Panc1 (cell line): ENCODE measurements at regions of chr3 and their contacts with region 1.

Region 1: DNA sequence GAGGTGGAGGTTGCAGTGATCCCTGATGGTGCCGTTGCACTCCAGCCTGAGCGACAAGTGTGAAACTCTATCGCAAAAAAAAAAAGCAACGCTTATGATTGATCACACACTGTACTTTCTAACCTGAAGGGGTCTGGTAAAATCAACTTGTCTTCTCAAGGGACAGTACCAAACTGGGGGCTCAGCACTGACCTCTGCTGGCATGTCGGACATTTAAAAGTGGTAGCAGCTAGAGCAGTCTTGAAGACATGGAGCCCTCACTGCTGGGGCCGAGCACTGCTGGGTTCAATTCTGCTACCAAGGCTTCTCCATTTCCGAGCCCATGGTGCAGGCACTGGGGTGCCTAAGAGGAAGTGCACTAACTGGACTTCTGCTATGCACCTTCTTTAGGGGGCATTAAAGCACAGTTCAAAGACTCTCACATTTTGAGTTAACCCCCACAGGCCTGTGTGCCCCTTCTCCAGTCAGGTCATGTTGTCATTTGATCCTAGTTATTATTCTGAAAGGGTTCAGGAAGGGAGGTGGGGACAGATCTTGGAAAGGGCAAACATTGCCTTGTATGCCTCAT is 26.4 kb upstream of the LAMP3 start:
- DNase-seq: no peak
- ATAC-seq: no peak
- H3K4me3 ChIP-seq: no peak overlapping the region
- H3K27ac ChIP-seq: no peak overlapping the region
- H3K4me1 ChIP-seq: peaks cover 8% of the 10 kb centered on the region
- H3K27me3 ChIP-seq: no peaks in the 10 kb centered on the region
- CTCF ChIP-seq: peak; percentile 80

Region 2: GRCh38 chr3:182947888-182948287 is 241.1 kb before region 1 on chr3:
- CTCF ChIA-PET with region 1: no interaction called
- POLR2A ChIA-PET with region 1: no interaction called
- in situ Hi-C with region 1: no loop called
- intact Hi-C with region 1: no loop called
- DNase-seq: no peak
- ATAC-seq: peak; percentile 90
- H3K4me3 ChIP-seq: no peak overlapping the region
- H3K27ac ChIP-seq: no peak overlapping the region
- H3K4me1 ChIP-seq: no peaks in the 10 kb centered on the region
- H3K27me3 ChIP-seq: no peaks in the 10 kb centered on the region
- CTCF ChIP-seq: peak; percentile 59

Region 3: DNA sequence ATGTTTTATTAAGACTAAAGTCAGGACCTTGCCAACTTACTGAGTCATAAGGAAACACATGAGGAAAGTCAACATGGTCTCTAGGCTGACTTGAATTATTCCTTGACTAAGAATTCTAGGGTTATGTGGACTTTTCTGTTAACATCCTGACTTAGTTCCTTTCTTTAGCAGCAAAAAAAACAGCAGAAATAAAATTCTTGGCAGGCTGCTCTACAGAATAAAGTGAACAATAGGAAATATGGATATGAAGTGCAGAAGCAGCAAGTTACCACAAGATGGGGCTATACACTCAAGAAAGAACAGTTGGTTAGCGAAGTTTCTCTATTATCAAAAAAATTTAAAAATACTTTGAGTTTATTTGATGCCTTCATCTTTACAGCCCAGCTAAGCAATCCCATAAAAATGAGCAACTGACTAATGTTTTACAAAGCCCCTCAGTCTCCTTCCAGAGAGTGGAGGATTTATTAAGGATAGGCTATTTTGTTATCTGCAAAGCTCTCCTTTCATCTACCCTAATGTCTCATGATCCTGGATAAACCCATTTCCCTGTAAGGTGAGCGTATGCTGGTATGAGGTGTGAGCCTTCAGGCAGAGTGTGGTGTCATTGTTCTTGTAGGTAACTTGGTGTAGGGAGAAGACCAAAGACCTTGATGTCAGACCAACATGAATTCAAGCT is 66.6 kb before region 1 on chr3:
- CTCF ChIA-PET with region 1: no interaction called
- POLR2A ChIA-PET with region 1: no interaction called
- in situ Hi-C with region 1: no loop called
- intact Hi-C with region 1: loop called (anchors 2 kb)
- DNase-seq: peak; percentile 58
- ATAC-seq: peak; percentile 68
- H3K4me3 ChIP-seq: no peak overlapping the region
- H3K27ac ChIP-seq: no peak overlapping the region
- H3K4me1 ChIP-seq: no peaks in the 10 kb centered on the region
- H3K27me3 ChIP-seq: no peaks in the 10 kb centered on the region
- CTCF ChIP-seq: peak; percentile 81; the same call in 1 of the 2 replicates

Region 4: DNA sequence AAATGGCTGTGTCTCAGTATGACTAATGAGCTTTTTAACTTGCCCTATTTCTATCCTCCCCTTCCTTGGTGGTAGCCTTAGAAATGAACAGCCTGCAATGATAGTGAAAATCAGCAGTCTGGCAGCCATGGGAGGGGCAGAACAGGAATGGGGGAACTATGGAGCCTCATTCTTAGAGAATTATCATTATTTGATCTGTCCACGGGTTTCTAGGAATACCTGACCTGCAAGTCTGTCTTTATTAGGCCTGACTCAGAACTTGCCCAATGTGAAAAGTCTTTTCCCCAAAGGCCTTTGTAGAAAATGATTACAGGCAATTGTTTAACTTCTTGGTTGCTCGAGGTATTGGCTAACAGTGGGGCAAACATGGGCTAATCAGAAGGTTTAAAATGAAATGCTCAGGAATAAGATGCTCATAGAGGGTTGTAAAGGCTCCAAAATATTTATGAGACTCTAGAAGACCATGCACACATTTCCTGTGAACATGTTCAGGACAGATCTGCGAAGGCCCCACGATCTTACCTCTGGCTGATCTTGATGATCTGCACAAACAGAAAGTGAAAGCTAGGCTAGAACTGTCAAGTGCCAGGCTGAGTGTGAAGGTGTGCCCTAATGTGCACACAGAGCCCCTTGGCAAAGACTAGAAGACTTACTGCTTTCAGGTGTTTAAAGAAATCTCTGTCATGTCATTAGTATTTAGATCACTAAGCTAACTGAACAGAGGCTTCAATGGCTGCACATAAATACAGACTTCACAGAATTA is 13.2 kb after region 1 on chr3:
- CTCF ChIA-PET with region 1: no interaction called
- POLR2A ChIA-PET with region 1: no interaction called
- in situ Hi-C with region 1: no loop called
- intact Hi-C with region 1: no loop called
- DNase-seq: no peak
- ATAC-seq: no peak
- H3K4me3 ChIP-seq: no peak overlapping the region
- H3K27ac ChIP-seq: no peak overlapping the region
- H3K4me1 ChIP-seq: no peaks in the 10 kb centered on the region
- H3K27me3 ChIP-seq: no peaks in the 10 kb centered on the region
- CTCF ChIP-seq: no peak

Region 5: GRCh38 chr3:183328823-183329222 is 139.8 kb after region 1 on chr3:
- CTCF ChIA-PET with region 1: no interaction called
- POLR2A ChIA-PET with region 1: no interaction called
- in situ Hi-C with region 1: no loop called
- intact Hi-C with region 1: no loop called
- DNase-seq: no peak
- ATAC-seq: 0 out of 2 replicates have a peak, but pooled peaks have one; percentile 45
- H3K4me3 ChIP-seq: no peak overlapping the region
- H3K27ac ChIP-seq: no peak overlapping the region
- H3K4me1 ChIP-seq: no peaks in the 10 kb centered on the region
- H3K27me3 ChIP-seq: no peaks in the 10 kb centered on the region
- CTCF ChIP-seq: no peak

Region 6: DNA sequence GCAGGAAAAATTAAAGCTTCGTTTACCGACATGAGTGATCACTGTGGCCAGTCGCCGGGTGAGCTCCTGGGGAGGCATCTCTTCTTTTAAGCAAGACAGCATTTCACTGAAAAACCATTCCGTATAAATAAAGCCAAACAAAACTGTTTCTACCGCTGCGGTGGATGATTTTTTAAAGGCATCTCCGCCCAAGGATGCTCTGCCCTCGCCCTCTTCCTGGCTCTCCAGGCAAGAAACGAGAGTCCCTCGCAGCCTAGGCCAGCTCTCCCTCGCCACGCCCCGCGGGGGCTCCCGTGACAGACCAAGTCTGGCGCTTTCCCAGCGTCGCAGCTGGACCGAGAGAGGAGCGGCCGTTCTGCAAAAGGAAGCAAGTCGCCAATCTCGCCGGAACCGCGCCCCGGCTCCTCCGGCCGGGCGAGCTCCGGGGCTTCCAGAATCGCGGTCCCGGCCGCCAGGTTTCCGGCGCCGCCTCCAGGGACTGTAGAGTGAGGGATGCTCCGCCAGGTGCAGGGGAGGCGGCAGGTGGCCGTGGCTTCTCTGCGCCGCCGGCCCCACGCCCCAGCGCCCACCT is 239.0 kb after region 1 on chr3:
- CTCF ChIA-PET with region 1: no interaction called
- POLR2A ChIA-PET with region 1: no interaction called
- in situ Hi-C with region 1: no loop called
- intact Hi-C with region 1: no loop called
- DNase-seq: no peak
- ATAC-seq: peak; percentile 64
- H3K4me3 ChIP-seq: peak overlapping the region; percentile 68 to 70
- H3K27ac ChIP-seq: no peak overlapping the region
- H3K4me1 ChIP-seq: no peaks in the 10 kb centered on the region
- H3K27me3 ChIP-seq: peaks cover 11% of the 10 kb centered on the region
- CTCF ChIP-seq: no peak

Region 7: DNA sequence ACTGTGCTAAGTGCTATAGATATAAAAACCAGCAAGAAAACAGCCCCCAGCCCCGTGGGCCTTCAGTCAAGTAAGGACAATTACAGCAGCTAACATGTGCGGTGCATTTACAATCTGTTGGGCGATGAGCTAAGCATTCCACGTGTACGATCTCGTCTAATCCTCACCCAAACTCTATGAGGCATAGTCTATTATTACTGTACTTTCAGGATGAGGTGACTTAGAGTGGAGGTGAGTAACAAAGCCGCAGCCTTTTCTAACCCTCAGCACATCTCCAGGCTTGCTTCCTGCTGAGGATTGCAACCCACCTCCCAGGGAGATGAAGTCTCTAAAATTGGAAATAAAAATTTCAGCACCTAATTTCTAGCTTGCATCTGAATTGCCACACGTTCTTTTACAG is 292.6 kb after region 1 on chr3:
- CTCF ChIA-PET with region 1: interaction called, 10 read pairs
- POLR2A ChIA-PET with region 1: no interaction called
- in situ Hi-C with region 1: no loop called
- intact Hi-C with region 1: no loop called
- DNase-seq: no peak
- ATAC-seq: no peak
- H3K4me3 ChIP-seq: no peak overlapping the region
- H3K27ac ChIP-seq: no peak overlapping the region
- H3K4me1 ChIP-seq: no peaks in the 10 kb centered on the region
- H3K27me3 ChIP-seq: peaks cover 3% of the 10 kb centered on the region; the same call in 1 of the 2 replicates
- CTCF ChIP-seq: no peak